ENCODE measurements at regions of chr1 and their contacts with region 1.

Region 1: DNA sequence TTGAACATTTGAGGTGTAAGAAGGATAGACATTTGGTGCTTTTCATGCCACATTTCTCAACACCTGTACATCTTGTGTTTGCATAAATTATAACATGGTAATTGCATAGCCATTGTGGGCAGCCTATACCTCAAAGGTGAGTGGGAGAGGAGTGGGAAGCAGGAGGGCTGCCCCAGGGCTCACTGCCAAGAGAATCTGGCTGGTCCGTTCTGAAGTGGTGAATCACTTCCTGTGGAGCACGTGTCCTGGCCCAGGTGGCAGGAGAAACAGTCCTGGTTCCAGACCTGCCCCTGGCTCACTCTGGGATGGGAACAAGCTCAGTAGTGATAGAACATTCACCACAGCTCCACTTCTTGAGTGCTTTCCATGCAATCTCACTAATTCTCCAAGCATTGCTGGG is 11.6 kb upstream of the OLFML2B start:
- DNase-seq: peak; percentile 89
- H3K4me3 Mint-ChIP-seq: no peak overlapping the region
- H3K27ac Mint-ChIP-seq: no peak overlapping the region
- H3K4me1 Mint-ChIP-seq: peaks cover under 1% of the 10 kb centered on the region
- H3K27me3 Mint-ChIP-seq: peaks cover 11% of the 10 kb centered on the region
- CTCF ChIP-seq: no peak

Region 2: GRCh38 chr1:161738627-161739287 is 296.5 kb before region 1 on chr1:
- CTCF ChIA-PET with region 1: interaction called, 11 read pairs
- POLR2A ChIA-PET with region 1: no interaction called
- intact Hi-C with region 1: loop called (anchors 5 kb)
- DNase-seq: peak; percentile 87
- H3K4me3 Mint-ChIP-seq: no peak overlapping the region
- H3K27ac Mint-ChIP-seq: no peak overlapping the region
- H3K4me1 Mint-ChIP-seq: peaks cover 35% of the 10 kb centered on the region
- H3K27me3 Mint-ChIP-seq: no peaks in the 10 kb centered on the region
- CTCF ChIP-seq: peak; percentile 76

Region 3: GRCh38 chr1:161792740-161793139 is 242.5 kb before region 1 on chr1:
- CTCF ChIA-PET with region 1: interaction called, 508 read pairs
- POLR2A ChIA-PET with region 1: interaction called, 67 read pairs
- intact Hi-C with region 1: loop called (anchors 1 kb)
- DNase-seq: peak; percentile 87
- H3K4me3 Mint-ChIP-seq: no peak overlapping the region
- H3K27ac Mint-ChIP-seq: no peak overlapping the region
- H3K4me1 Mint-ChIP-seq: peaks cover 18% of the 10 kb centered on the region
- H3K27me3 Mint-ChIP-seq: no peaks in the 10 kb centered on the region
- CTCF ChIP-seq: peak; percentile 71

Region 4: DNA sequence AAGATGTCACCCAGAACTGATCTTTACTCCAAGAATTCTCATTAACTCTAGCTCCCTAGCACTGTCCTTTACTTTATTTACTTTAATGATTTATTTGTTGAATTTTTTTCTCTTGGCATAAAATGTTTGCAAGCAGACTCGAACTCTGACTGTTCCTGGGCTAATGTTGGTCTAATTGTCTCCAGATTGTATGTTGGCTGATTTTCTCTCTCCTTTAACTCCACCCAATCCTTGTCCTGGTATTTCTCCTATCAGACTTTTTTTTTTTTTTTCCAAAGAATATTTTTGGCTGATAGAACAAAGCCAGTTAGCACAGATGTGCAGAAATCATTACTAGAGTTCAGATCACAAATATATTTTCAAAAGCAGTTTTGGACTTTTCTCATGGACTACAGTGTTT is 186.6 kb before region 1 on chr1:
- CTCF ChIA-PET with region 1: interaction called, 10 read pairs
- POLR2A ChIA-PET with region 1: no interaction called
- intact Hi-C with region 1: no loop called
- DNase-seq: no peak
- H3K4me3 Mint-ChIP-seq: no peak overlapping the region
- H3K27ac Mint-ChIP-seq: no peak overlapping the region
- H3K4me1 Mint-ChIP-seq: peaks cover 15% of the 10 kb centered on the region
- H3K27me3 Mint-ChIP-seq: no peaks in the 10 kb centered on the region
- CTCF ChIP-seq: no peak

Region 5: GRCh38 chr1:161905269-161905884 is 129.9 kb before region 1 on chr1:
- CTCF ChIA-PET with region 1: interaction called, 20 read pairs
- POLR2A ChIA-PET with region 1: no interaction called
- intact Hi-C with region 1: no loop called
- DNase-seq: peak; percentile 67
- H3K4me3 Mint-ChIP-seq: no peak overlapping the region
- H3K27ac Mint-ChIP-seq: no peak overlapping the region
- H3K4me1 Mint-ChIP-seq: peaks cover 9% of the 10 kb centered on the region
- H3K27me3 Mint-ChIP-seq: no peaks in the 10 kb centered on the region
- CTCF ChIP-seq: peak; percentile 52

Region 6: DNA sequence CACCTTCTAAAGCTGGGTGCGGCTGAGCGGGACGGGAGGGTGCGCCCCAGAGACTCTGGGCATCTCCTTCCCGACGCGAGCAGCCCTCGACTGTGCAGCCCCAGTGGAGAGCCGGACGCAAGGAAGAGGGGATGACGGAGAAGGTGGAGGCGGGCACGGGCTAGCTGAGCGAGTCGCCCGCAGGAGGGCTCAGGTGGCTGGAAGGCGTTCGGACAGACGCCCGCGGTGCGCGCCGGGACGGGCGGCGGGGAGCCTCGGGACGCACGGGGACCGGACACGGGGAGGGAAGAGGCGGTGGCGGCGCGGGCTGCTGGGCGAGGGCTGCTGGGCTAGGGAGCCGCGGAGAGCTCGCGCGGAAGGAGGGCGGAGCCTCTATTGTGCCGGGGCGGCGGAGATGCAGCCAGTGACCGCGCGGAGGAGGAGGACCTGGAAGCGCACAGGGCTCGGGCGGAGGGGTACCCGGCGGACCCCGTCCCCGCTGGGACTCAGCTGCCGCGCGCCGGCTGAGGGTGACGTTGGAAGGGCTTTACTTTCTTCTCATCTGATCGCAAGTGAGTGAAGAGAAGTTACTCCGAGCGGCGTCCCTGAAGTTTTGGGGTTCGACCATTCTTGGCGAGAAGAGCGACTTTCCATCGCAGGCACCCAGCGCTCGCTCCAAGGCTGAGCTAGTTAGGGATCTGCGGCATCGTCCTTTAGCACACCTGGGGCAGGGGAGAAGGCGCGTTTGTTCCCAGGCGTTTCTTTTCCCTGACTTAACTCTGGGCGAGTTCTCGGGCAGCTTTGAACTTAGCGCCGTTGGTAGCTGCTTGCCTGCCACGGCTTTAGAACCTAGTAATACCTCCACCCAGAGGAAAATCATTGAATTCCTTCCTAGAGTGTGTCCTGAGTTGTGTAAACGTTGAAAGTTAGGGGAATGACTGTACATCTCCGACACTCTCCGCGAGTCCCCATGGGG is 11.4 kb before region 1 on chr1 and contains the start of gene OLFML2B:
- CTCF ChIA-PET with region 1: interaction called, 97 read pairs
- POLR2A ChIA-PET with region 1: interaction called, 6 read pairs
- intact Hi-C with region 1: no loop called
- DNase-seq: peak; percentile 86
- H3K4me3 Mint-ChIP-seq: peak within 1 kb of the TSS; percentile 89
- H3K27ac Mint-ChIP-seq: peak within 1 kb of the TSS; percentile 65
- H3K4me1 Mint-ChIP-seq: peaks cover 15% of the 10 kb centered on the region
- H3K27me3 Mint-ChIP-seq: peaks cover 34% of the 10 kb centered on the region
- CTCF ChIP-seq: peak; percentile 45
- total RNA-seq, gene OLFML2B: not detected in 2 replicates

Region 7: DNA sequence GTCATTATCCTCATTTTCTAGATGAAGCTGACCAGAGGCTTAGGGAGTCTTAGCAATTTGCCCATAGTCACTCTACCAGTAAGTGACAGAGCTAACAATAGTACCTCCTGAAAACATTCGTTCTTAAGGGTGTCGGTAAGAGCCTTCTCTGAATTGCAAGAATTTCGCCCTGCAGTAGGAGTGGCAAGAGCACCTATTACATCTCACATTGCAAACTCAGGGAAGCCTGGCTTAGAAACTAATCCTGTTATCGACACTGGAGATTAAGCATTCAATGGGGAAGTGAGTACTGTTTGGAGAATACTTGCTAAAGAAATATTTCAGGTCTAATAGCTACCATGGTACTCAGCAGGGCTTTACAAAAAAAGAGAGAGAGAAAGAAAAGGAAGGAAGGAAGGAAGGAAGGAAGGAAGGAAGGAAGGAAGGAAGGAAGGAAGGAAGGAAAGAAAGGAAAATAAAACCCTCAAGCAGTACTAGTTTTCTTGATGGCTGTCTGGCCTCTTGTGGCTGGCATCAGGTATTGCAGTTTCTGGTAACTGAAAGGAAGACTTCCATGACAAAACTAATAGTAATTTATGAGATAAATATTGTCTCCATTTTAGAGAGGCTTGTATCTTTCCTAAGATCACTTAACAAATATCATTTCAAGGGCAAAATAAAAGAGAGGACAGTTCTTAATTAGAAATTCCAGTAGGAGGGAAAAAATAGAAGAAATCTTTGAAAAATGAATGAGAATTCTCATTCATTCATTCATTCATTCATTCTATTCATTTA is 356.7 kb after region 1 on chr1:
- CTCF ChIA-PET with region 1: interaction called, 13 read pairs
- POLR2A ChIA-PET with region 1: no interaction called
- intact Hi-C with region 1: no loop called
- DNase-seq: peak; percentile 72
- H3K4me3 Mint-ChIP-seq: no peak overlapping the region
- H3K27ac Mint-ChIP-seq: no peak overlapping the region
- H3K4me1 Mint-ChIP-seq: peaks cover 37% of the 10 kb centered on the region
- H3K27me3 Mint-ChIP-seq: peaks cover 13% of the 10 kb centered on the region
- CTCF ChIP-seq: peak; percentile 93

Measured in MCF 10A (cell line).